ENCODE measurements at regions of chr4 and their contacts with region 1.

Region 1: GRCh38 chr4:15794905-15795304 is 16.8 kb downstream of the CD38 start:
- DNase-seq: no peak
- ATAC-seq: no peak
- H3K4me3 ChIP-seq: no peak overlapping the region
- H3K4me3 Mint-ChIP-seq: no peak overlapping the region
- H3K27ac ChIP-seq: no peak overlapping the region
- H3K27ac Mint-ChIP-seq: no peak overlapping the region
- H3K4me1 ChIP-seq: peaks cover 6% of the 10 kb centered on the region
- H3K4me1 Mint-ChIP-seq: peaks cover 18% of the 10 kb centered on the region
- H3K27me3 ChIP-seq: no peaks in the 10 kb centered on the region
- H3K27me3 Mint-ChIP-seq: no peaks in the 10 kb centered on the region
- CTCF ChIP-seq: no peak

Region 2: DNA sequence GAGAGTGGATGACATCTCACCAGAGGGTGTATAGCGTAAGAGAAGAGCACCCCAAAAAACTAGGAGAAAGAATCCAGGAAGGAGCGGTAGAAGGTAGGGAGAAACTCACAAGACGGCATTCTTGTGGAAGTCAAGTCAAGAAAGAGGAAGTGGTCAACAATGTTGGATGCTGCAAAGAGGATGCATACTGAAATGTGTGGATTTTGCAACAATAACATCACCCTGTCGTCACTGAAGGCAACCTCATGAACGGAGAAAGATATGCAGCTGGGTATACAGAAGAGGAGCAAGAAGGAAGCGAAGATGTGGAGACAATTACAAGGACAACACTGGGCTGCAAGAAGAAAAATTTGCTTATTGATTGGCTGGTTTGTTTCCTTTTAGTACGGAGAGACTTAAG is 442.8 kb after region 1 on chr4:
- CTCF ChIA-PET with region 1: no interaction called
- POLR2A ChIA-PET with region 1: no interaction called
- intact Hi-C with region 1: loop called in 1 of 2 experiments (anchors 10 kb)
- DNase-seq: peak in 1 of 9 experiments; percentile 19
- ATAC-seq: no peak
- H3K4me3 ChIP-seq: no peak overlapping the region
- H3K4me3 Mint-ChIP-seq: no peak overlapping the region
- H3K27ac ChIP-seq: no peak overlapping the region
- H3K27ac Mint-ChIP-seq: no peak overlapping the region
- H3K4me1 ChIP-seq: no peaks in the 10 kb centered on the region
- H3K4me1 Mint-ChIP-seq: peaks cover 2% of the 10 kb centered on the region
- H3K27me3 ChIP-seq: no peaks in the 10 kb centered on the region
- H3K27me3 Mint-ChIP-seq: no peaks in the 10 kb centered on the region
- CTCF ChIP-seq: no peak

Region 3: GRCh38 chr4:16967722-16968121 is 1172.8 kb after region 1 on chr4:
- CTCF ChIA-PET with region 1: no interaction called
- POLR2A ChIA-PET with region 1: no interaction called
- intact Hi-C with region 1: no loop called
- DNase-seq: no peak
- ATAC-seq: no peak
- H3K4me3 ChIP-seq: no peak overlapping the region
- H3K4me3 Mint-ChIP-seq: no peak overlapping the region
- H3K27ac ChIP-seq: no peak overlapping the region
- H3K27ac Mint-ChIP-seq: no peak overlapping the region
- H3K4me1 ChIP-seq: no peaks in the 10 kb centered on the region
- H3K4me1 Mint-ChIP-seq: no peaks in the 10 kb centered on the region
- H3K27me3 ChIP-seq: no peaks in the 10 kb centered on the region
- H3K27me3 Mint-ChIP-seq: peaks cover 2% of the 10 kb centered on the region
- CTCF ChIP-seq: no peak

Measured in CD8-positive, alpha-beta T cell (primary cell).